ENCODE measurements at regions of chr12 and their contacts with region 1.

Region 1: DNA sequence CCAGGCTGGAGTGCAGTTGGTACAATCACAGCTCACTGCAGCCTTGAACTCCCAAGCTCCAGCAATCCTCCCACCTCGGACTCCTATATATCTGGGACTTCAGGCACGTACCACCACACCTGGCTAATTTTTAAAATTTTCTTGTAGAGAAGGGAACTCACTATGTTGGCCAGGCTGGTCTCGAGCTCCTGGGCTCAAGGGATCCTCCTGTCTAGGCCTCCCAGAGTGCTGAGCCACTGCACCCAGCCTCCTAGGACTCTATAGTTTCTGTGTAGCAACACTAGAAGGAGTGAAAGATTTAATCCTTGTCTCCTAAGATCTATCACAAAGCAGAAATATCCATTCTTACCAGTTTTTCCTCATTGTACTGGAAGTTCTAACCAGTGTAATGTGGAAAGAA is 4.3 kb upstream of the APOF start:
- DNase-seq: no peak
- H3K4me3 ChIP-seq: no peak overlapping the region
- H3K27ac ChIP-seq: no peak overlapping the region
- H3K4me1 ChIP-seq: no peaks in the 10 kb centered on the region
- H3K27me3 ChIP-seq: no peaks in the 10 kb centered on the region
- CTCF ChIP-seq: no peak

Region 2: GRCh38 chr12:56413392-56413791 is 46.4 kb after region 1 on chr12:
- CTCF ChIA-PET with region 1: interaction called, 11 read pairs
- POLR2A ChIA-PET with region 1: no interaction called
- intact Hi-C with region 1: no loop called
- DNase-seq: no peak
- H3K4me3 ChIP-seq: no peak overlapping the region
- H3K27ac ChIP-seq: no peak overlapping the region
- H3K4me1 ChIP-seq: no peaks in the 10 kb centered on the region
- H3K27me3 ChIP-seq: no peaks in the 10 kb centered on the region
- CTCF ChIP-seq: no peak